ENCODE measurements at regions of chr16 and their contacts with region 1.

Region 1: GRCh38 chr16:24525970-24526559 is 13.3 kb upstream of the RBBP6 start:
- DNase-seq: no peak
- H3K4me3 ChIP-seq: no peak overlapping the region
- H3K27ac ChIP-seq: no peak overlapping the region
- H3K27me3 ChIP-seq: no peaks in the 10 kb centered on the region
- CTCF ChIP-seq: no peak

Region 2: GRCh38 chr16:23694644-23695373 is 831.3 kb before region 1 on chr16:
- CTCF ChIA-PET with region 1: interaction called, 12 read pairs
- POLR2A ChIA-PET with region 1: no interaction called
- DNase-seq: no peak
- H3K4me3 ChIP-seq: peak overlapping the region; percentile 32
- H3K27ac ChIP-seq: no peak overlapping the region
- H3K27me3 ChIP-seq: no peaks in the 10 kb centered on the region
- CTCF ChIP-seq: no peak